ENCODE measurements at regions of chr10 and their contacts with region 1.

Region 1: DNA sequence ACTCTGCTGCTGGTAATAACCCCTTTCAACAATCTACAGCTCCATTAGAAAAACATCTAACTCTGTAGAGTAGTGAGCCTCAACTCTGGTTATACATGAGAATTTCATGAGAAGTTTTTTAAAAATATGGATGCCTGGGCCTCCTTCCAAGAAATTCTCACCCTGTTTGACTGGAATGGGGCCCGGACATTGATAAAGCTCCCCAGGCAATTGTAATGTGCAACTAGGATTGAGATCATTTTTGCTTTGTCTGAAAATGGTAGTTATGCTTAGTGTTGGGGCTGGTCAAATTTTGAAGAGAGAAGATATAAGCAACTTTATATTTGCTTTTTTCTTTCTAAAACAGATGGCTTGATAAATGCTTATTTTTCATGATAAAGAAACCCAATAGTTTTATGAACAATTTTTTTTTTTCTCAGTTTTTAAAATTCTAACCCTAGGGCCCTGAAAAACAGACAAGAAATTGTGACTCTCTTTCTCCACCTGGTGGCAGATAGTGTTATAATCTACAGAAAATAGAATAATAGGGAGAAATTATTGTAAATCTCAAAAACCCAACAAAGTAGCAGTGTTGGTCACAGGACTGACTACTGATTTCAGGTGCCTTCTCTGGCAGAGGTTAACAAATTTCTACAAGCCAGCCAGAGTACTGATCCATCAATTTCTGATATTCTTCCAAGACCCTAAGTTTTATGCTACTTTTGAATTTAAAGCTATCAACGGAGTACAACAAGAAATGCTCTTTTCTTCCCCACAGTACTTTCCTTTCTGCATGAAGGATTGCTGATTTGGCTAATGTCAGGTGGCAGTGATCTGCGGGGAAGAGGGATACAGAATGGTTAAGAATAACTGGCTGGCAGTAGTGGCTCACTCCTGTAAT is 174.8 kb downstream of the DKK1 start:
- DNase-seq: peak; percentile 36
- H3K4me3 ChIP-seq: no peak overlapping the region
- H3K27ac ChIP-seq: peak overlapping the region; percentile 95
- H3K4me1 ChIP-seq: peaks cover 31% of the 10 kb centered on the region
- H3K27me3 ChIP-seq: no peaks in the 10 kb centered on the region
- CTCF ChIP-seq: peak; percentile 33 to 55

Region 2: DNA sequence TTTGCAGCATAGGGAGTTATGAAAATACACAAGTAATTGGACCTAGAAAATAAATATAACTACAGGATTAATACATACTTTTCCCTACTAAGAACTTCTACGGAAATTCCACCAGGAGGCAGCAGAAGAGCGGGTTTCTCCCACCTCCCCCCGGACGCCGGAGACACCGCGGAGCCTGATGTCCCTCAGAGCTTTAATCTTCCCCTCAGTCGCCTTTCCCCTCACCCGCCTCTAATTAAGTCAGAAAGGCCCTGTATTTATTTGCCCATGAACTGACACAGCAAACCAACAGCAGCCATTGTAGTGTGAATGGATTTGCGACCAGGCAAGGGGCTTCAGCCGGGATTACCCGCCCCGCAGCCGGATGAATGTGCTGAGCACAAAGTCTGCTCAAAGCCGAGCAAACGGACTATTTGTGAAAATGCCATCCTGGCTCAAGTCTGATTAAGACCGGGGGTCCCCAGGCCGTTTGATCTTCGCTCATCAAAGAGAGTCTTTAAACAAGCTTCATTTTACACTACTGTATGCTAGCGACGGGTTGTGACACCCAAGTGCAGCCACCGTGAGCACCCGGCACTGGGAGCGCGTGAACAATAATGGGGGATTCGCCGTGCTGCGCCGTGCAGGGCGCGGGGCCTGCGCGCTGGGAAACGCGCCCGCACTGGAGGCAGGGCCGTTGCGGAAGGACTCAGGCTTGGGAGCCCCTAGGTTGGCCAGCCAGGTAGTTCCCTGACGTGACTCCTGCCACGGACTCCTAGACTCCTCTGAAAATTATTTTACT is 180.4 kb before region 1 on chr10:
- CTCF ChIA-PET with region 1: interaction called, 5 read pairs
- dilution Hi-C with region 1: no loop called
- in situ Hi-C with region 1: no loop called
- intact Hi-C with region 1: loop called (anchors 1 kb)
- DNase-seq: peak; percentile 45
- H3K4me3 ChIP-seq: peak overlapping the region; percentile 42 to 50 (median 45)
- H3K27ac ChIP-seq: peak overlapping the region; percentile 40
- H3K4me1 ChIP-seq: peaks cover 17% of the 10 kb centered on the region
- H3K27me3 ChIP-seq: no peaks in the 10 kb centered on the region
- CTCF ChIP-seq: peak; percentile 46 to 72

Region 3: DNA sequence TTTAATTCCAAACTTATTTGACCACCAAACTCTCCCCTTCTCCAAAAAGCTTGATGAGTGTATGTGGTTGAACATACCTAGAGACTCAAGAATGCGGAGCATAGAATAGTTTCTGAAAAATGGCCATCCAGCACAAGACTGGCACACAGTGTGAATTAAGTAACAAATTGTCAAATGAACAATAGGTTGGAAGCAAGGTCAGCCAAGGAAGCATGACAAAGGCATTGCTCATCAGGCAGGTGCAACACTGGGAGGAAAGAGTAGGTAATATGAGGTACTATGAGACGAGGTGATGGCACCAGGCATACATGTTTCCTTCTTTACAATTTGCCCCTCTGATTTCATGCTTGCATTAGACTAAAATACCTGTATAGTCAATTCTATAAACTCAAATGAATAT is 101.1 kb before region 1 on chr10:
- CTCF ChIA-PET with region 1: no interaction called
- dilution Hi-C with region 1: no loop called
- in situ Hi-C with region 1: no loop called
- intact Hi-C with region 1: loop called (anchors 5 kb)
- DNase-seq: peak; percentile 85
- H3K4me3 ChIP-seq: no peak overlapping the region
- H3K27ac ChIP-seq: peak overlapping the region; percentile 30
- H3K4me1 ChIP-seq: peaks cover 35% of the 10 kb centered on the region
- H3K27me3 ChIP-seq: no peaks in the 10 kb centered on the region
- CTCF ChIP-seq: no peak

Region 4: GRCh38 chr10:52443419-52444388 is 45.1 kb before region 1 on chr10:
- CTCF ChIA-PET with region 1: no interaction called
- dilution Hi-C with region 1: no loop called
- in situ Hi-C with region 1: loop called in 1 of 2 experiments (anchors 5 kb)
- intact Hi-C with region 1: loop called (anchors 1 kb)
- DNase-seq: peak; percentile 98
- H3K4me3 ChIP-seq: peak overlapping the region in 1 of 3 experiments; percentile 25
- H3K27ac ChIP-seq: peak overlapping the region; percentile 96
- H3K4me1 ChIP-seq: peaks cover 39% of the 10 kb centered on the region
- H3K27me3 ChIP-seq: no peaks in the 10 kb centered on the region
- CTCF ChIP-seq: no peak

Region 5: GRCh38 chr10:52451817-52452216 is 37.0 kb before region 1 on chr10:
- CTCF ChIA-PET with region 1: interaction called, 4 read pairs
- dilution Hi-C with region 1: no loop called
- in situ Hi-C with region 1: loop called in 1 of 2 experiments (anchors 5 kb)
- intact Hi-C with region 1: loop called (anchors 1 kb)
- DNase-seq: peak; percentile 88
- H3K4me3 ChIP-seq: peak overlapping the region in 2 of 3 experiments; percentile 24 to 56
- H3K27ac ChIP-seq: peak overlapping the region; percentile 94
- H3K4me1 ChIP-seq: peaks cover 70% of the 10 kb centered on the region
- H3K27me3 ChIP-seq: no peaks in the 10 kb centered on the region
- CTCF ChIP-seq: no peak

Region 6: DNA sequence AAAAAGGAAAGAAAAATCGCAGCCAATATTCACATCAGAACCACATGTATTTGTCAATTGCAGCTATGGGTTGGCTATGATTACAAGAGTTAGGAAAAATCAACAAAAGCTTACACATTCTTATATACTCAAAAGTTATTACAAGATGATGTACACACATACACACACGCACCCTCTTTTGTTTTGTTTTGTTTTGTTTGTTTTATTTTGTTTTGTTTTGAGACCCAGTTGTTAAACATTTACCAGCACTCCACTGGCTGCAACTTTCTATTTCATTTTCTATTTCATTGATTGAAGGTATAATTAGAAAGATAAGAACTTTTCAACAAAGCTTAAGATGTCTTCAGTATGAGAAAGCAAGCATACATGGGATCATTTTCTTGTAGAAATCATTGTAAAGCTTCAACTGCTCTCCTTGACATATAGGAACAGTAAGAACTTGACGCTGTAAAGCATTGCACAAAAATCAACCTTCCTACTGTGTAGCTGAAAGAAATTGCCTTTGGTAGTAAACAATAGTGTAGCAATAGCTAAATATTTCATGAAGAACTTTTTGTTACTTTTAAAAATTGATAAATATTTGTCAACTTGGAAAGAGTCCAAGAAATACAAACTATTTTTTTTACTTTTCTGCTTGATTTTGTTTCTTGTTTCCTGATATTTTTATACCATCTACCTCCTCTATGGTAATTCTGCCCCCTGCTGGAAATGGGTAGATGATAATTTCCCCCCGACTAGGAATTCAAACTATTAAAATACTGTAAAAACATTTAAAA is 77.8 kb after region 1 on chr10:
- CTCF ChIA-PET with region 1: interaction called, 4 read pairs
- dilution Hi-C with region 1: no loop called
- in situ Hi-C with region 1: no loop called
- intact Hi-C with region 1: loop called (anchors 1 kb)
- DNase-seq: peak; percentile 35
- H3K4me3 ChIP-seq: no peak overlapping the region
- H3K27ac ChIP-seq: no peak overlapping the region
- H3K4me1 ChIP-seq: peaks cover 4% of the 10 kb centered on the region
- H3K27me3 ChIP-seq: no peaks in the 10 kb centered on the region
- CTCF ChIP-seq: peak; percentile 55 to 68

Region 7: GRCh38 chr10:52729271-52730104 is 240.6 kb after region 1 on chr10:
- CTCF ChIA-PET with region 1: no interaction called
- dilution Hi-C with region 1: no loop called
- in situ Hi-C with region 1: no loop called
- intact Hi-C with region 1: loop called (anchors 5 kb)
- DNase-seq: peak; percentile 18
- H3K4me3 ChIP-seq: no peak overlapping the region
- H3K27ac ChIP-seq: no peak overlapping the region
- H3K4me1 ChIP-seq: no peaks in the 10 kb centered on the region
- H3K27me3 ChIP-seq: no peaks in the 10 kb centered on the region
- CTCF ChIP-seq: peak; percentile 49 to 56

Measured in mammary epithelial cell (primary cell).